Posterior cingulate gyrus (tissue), 11 donors: ENCODE measurements at regions of chr11 and their contacts with region 1.

Region 1: DNA sequence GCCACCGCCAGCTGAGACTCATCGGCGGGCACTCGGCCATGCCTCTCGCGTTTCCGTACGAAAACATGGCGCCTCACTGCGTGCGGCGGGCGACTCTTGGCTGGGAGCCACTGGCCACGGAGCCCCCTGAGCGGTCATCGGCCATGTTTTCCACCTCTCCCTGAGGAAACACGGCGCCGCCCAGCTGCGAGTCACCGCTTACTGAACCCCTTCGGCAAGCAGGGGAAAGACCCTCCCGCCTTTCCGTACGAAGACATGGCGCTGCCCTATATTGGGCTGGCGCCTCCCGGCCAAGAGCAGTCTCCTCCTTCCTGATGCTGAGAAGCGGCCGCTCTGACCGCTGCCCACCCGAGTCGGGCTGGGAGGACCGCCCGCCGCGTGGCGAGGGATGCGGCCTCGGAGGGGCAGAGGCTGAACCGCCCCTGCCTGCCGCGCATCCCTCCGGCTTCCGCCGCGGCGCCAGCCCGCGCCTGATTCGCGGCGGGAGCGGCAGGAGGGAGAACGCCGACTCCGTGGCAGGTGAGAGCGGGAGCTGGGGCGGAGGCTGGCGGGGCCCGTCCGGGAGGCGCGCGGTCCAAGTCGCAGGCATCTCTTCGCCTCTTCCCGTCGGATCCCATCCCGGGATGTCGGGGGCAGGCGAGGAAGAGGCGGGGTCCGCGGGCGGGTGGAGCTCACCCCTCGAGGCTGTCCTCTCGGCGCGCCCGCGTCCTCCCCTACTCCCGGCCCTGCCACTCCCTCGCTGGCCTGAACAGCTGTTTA is at the start of gene TCP11L1:
- DNase-seq: peak; percentile 91 to 99 (median 93)

Region 2: DNA sequence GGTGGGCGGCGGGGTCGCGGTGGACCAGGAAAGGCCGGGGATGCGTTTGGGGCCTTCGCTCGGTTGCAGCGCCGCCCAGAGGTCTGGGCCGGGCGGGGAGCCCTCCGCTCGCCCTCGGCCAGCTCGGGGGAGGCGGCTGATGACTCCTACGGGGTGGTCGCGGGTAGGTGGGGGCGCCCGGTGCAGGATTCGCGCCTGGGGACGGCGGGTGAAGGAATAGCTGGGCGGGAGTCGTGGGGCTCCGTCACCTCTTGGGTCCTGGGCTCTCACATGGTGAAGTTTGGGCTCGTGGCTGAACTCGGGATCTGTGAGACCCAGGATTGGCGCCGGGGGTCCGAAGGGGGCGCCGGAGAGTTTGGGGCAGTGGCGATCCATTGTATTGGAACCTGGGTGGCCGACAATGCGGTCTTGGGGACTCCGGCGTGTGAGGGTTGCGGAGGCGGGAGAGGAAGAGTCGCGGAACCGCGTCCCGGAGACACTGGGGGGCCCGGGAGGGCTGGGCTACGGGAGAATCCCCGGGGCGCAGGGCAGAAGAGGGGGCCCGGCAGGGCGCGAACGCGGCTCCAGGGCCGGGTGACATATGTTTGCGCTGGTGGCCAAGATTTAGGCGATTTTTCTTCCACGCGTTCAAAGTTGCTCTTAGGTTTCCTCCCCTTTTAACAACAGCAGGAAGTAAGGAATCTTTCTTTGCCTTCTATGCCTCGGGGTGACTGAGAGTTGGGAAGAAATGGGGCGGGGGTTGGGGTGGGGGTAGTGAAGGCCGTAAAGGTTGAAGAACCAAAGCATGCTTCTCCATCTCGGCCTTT is 145.9 kb before region 1 on chr11:
- intact Hi-C with region 1: loop called (anchors 5 kb)
- DNase-seq: peak in 9 of 10 donors; percentile 44 to 90 (median 48)

Region 3: DNA sequence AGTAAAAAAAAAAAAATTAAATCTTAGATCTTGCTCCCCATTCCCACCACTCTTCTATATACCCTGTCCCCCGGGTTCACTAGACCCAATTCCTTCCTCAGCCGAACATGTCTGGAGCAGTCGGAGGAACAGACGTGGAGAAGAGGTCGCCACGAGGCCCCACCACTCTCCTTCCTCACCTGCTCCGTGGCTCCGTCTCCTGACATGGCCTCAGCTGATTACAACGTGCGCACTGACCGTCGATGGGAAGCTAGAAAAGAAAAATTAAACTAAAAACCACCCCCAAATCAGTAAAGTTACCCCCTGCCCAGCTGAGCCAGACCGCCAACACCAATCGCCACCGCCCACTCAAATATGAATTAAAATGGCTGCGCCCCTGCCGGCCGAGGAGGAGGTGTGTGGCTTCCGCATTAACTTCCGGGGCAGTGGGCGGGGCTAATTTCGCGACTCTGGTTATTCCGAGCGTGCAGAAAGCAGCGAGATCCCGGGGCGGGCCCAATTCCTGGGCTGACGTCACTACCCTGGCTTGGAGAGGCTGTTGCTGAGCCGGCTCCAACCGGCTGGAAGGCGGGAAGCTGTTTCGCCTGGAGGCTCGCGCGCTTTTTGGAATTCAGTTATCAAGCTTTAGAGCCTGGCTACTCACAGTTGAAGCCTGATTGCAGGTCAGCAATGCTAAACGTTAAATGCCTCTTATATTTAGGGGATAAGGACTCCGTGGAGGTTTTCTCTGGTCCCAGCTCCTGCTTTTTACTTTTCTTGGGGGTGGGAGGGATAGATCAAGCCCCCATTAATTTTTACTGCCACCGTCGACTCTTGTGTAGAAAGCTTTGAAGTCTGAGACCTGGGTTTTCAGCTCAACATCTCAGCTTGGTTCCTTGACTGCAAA is 121.9 kb after region 1 on chr11 and contains the start of gene CSTF3:
- intact Hi-C with region 1: loop called (anchors 2 kb)
- DNase-seq: peak; percentile 100